OCI-LY7 (cell line): ENCODE measurements at regions of chr5 and their contacts with region 1.

Region 1: DNA sequence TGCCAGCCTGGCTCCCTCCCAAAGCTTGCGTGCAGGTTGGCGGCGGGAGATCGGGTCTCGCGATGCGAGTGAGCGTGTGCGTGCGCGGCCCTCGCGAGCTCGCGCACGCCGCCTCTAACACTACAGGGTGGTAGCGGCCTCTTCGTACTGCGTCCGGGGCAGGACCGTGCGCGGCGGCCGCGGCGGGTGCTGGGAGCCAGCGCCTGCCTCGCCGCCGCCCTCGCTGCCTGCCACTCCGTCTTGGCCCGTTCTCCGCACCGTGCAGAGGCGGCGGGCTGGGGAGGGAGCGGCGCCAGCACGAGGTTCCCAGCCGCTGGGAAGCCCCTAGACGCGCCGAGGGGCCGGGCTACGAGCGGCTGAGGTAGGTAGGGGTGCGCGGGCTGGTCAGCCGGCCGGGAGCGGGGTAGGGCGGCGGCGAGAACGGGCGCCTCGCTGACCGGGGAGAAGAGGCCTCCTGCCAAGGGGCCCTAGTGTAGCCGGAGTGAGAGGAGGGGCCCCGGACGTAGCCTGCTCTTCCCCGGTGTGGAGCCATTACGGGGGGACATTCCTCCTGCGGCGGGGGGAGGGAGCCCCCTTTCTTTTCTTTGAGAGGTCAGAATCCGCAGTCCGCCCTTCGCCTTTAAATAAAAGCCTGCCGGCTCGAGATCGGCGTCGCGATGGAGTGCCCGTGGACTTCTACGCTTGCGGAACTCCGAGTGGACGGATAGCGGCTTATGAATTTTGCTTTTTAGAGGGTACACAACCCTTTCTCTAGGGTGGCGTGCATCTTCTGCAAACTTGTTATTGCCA is at the start of gene C5orf24:
- DNase-seq: peak; percentile 96
- H3K4me3 ChIP-seq: peak within 1 kb of the TSS; percentile 79
- H3K27ac ChIP-seq: peak within 1 kb of the TSS; percentile 80
- H3K4me1 ChIP-seq: peaks cover 16% of the 10 kb centered on the region
- CTCF ChIP-seq: 0 out of 2 replicates have a peak, but pooled peaks have one; percentile 8
- total RNA-seq, gene C5orf24: 28.4 and 36.7 TPM in 2 replicates

Region 2: GRCh38 chr5:134758504-134759341 is 87.3 kb before region 1 on chr5 and contains the start of gene DDX46:
- CTCF ChIA-PET with region 1: no interaction called
- POLR2A ChIA-PET with region 1: interaction called, 3 read pairs
- intact Hi-C with region 1: loop called (anchors 5 kb)
- DNase-seq: peak; percentile 96
- H3K4me3 ChIP-seq: peak within 1 kb of the TSS; percentile 90
- H3K27ac ChIP-seq: peak within 1 kb of the TSS; percentile 48
- H3K4me1 ChIP-seq: peaks cover 31% of the 10 kb centered on the region
- CTCF ChIP-seq: peak; percentile 84
- total RNA-seq, gene DDX46: 44.5 and 47.1 TPM in 2 replicates

Region 3: GRCh38 chr5:134813407-134813806 is 32.6 kb before region 1 on chr5:
- CTCF ChIA-PET with region 1: no interaction called
- POLR2A ChIA-PET with region 1: interaction called, 4 read pairs
- intact Hi-C with region 1: loop called (anchors 2 kb)
- DNase-seq: peak; percentile 67
- H3K4me3 ChIP-seq: no peak overlapping the region
- H3K27ac ChIP-seq: peak overlapping the region; percentile 66
- H3K4me1 ChIP-seq: peaks cover 29% of the 10 kb centered on the region
- CTCF ChIP-seq: no peak

Region 4: GRCh38 chr5:135154197-135154596 is 308.2 kb after region 1 on chr5:
- CTCF ChIA-PET with region 1: no interaction called
- POLR2A ChIA-PET with region 1: no interaction called
- intact Hi-C with region 1: no loop called
- DNase-seq: no peak
- H3K4me3 ChIP-seq: no peak overlapping the region
- H3K27ac ChIP-seq: no peak overlapping the region
- H3K4me1 ChIP-seq: no peaks in the 10 kb centered on the region
- CTCF ChIP-seq: no peak